ENCODE measurements at regions of chr1 and their contacts with region 1.

Region 1: DNA sequence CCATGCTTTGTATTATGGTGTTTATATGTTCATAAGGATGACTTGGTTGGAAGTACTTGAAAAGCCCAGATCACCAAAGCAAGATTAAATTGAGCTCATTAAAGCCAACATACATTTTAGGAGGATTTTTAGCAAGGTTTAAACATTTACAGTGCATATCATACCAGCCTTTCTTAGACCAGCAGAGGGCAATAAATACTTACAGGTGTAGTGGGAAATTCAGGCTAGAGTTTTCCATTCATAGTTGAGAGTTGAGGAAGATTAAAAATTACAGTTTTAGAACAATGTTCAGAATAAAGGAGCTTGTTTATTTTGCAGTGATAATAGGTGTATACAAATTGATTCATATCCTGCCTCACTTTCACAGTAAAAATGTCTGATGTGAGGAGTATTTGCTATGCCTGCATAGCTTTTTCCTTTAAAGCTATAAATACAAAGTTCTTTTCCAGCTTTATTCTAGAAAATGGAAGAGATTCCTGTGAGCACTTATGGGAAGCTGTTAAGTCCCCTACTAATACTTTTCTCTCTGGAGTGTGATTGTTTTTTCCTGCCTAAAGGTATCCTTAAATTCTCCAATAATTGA is 35.3 kb downstream of the DTL start:
- DNase-seq: peak; percentile 35
- ATAC-seq: peak; percentile 69
- H3K4me3 ChIP-seq: no peak overlapping the region
- H3K27ac ChIP-seq: no peak overlapping the region
- H3K4me1 ChIP-seq: no peaks in the 10 kb centered on the region
- H3K27me3 ChIP-seq: no peaks in the 10 kb centered on the region
- CTCF ChIP-seq: peak; percentile 71
- EP300 ChIP-seq: no peak
- POLR2A ChIP-seq: no peak
- RAD21 ChIP-seq: peak; percentile 76

Region 2: DNA sequence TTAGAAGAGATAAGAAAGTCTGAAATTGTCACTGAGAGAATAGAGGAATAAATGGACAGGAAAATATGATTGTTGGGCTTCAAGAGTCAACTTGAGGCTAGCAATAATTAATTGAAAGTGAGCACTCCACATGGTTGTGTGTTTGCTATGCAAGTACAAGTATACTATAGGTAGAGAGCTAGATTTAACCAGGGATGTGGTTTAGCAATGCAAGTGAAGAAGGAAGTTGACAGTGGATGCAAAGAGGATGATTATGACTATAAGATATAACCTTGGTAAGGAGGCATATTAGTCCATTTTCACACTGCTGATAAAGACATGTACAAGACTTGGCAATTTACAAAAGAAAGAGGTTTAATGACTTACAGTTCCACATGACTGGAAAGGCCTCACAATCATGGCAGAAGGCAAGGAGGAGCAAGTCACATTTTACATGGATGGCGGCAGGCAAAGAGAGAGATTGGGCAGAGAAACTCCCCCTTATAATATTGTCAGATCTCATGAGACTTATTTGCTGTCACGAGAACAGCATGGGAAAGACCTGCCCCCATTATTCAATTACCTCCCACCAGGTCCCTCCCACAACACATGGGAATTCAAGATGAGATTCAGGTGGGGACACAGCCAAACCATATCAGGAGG is 12.1 kb after region 1 on chr1:
- CTCF ChIA-PET with region 1: no interaction called
- POLR2A ChIA-PET with region 1: no interaction called
- in situ Hi-C with region 1: no loop called
- intact Hi-C with region 1: no loop called
- DNase-seq: no peak
- ATAC-seq: no peak
- H3K4me3 ChIP-seq: no peak overlapping the region
- H3K27ac ChIP-seq: no peak overlapping the region
- H3K4me1 ChIP-seq: no peaks in the 10 kb centered on the region
- H3K27me3 ChIP-seq: no peaks in the 10 kb centered on the region
- CTCF ChIP-seq: no peak
- EP300 ChIP-seq: no peak
- POLR2A ChIP-seq: no peak
- RAD21 ChIP-seq: no peak

Region 3: DNA sequence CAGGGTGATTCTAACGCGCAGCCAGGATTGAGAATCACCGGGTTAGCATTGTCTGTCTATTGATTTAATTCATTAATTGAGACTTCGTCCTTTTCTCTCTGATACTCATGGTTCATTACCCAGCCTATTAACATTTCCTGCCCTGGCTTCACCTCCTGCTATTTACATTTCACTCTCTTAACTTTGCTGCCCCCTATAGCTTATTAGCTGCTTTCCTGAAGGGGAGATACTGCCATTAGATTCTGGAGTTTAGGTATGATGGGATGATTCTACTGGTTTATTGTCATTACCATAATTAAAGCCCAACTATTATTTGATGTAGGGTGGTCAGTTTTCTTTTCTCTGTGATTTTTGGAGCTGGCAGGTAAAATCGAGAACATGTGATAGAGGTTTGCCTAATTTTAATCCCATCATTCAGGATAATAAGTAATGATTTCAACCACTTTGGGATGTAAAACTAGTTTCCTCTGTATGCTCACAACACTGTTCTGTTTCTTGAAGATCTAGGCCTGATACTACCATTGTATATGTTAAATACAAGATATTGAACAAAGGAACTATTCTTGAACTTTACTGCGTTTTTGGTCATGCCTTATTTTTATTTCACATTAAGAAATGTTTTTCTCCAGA is 220.8 kb after region 1 on chr1:
- CTCF ChIA-PET with region 1: interaction called, 32 read pairs
- POLR2A ChIA-PET with region 1: interaction called, 7 read pairs
- in situ Hi-C with region 1: loop called (anchors 5 kb)
- intact Hi-C with region 1: loop called (anchors 1 kb)
- DNase-seq: peak; percentile 50
- ATAC-seq: peak; percentile 88
- H3K4me3 ChIP-seq: no peak overlapping the region
- H3K27ac ChIP-seq: no peak overlapping the region
- H3K4me1 ChIP-seq: peaks cover 62% of the 10 kb centered on the region
- H3K27me3 ChIP-seq: no peaks in the 10 kb centered on the region; a peak in 1 of 5 replicates
- CTCF ChIP-seq: peak; percentile 81
- EP300 ChIP-seq: no peak
- POLR2A ChIP-seq: no peak
- RAD21 ChIP-seq: peak; percentile 66; the same call in 1 of the 2 replicates

Measured in HepG2 (cell line).